Left colon (tissue), 2 donors: ENCODE measurements at regions of chr2 and their contacts with region 1.

Region 1: DNA sequence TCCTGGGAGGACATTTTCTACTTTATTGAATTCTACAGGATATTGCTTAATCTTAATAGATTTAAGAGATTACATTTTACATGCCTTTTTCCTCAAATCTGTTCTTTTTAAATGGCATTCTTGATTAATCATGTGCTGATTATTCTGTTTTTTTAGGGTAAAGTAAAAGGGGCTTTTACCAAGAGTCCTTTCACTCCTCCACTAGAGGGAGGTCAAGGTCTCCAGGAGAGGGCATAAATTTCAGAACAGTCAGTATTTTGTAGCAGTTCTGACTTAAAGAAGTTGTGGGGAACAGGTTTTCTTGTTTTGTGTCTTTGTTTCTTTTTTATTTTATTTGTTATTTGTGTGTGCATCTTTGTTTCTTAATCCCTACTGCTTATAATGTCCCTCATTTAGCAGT is 25.4 kb downstream of the WDR75 start:
- DNase-seq: no peak
- ATAC-seq: peak; percentile 63

Region 2: DNA sequence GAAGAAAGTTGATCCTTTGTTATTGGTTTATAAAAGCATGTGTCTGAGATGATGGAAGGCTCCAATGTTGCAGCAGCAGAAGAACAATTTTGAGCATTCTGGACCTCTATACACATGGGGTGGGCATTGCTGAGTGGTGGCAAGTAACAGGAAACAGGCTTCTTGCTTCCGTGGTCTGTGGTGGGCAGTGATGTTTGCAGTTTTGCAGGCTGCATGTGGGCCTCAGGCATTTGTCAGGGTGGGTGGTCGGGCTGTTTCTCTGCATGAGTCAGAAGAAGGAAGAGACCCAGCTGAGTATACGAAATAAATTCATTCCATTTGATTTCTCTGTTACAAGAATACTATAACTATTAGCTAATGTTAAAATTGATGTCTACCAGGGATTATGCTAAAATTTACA is 732.0 kb before region 1 on chr2:
- intact Hi-C with region 1: no loop called
- DNase-seq: no peak
- ATAC-seq: no peak

Region 3: DNA sequence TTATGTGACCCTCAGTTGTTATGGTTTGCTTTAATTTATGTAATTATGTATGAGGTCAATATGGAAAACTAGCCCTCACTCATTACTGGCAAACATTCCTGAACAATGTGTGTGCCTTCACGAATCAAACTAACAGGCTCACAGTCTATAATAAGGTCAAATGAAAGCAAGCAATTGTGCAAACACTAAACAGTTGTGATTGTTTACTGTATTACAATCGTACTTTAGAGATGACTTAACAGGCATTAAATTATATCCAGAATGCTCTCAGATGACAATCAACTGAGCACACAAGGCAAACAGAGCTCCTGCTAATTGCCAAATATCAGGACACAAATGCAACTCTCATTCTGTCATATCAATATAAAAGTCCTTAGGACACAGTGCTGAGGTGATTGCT is 316.6 kb before region 1 on chr2:
- intact Hi-C with region 1: no loop called
- DNase-seq: no peak
- ATAC-seq: no peak

Region 4: GRCh38 chr2:189569295-189569910 is 102.7 kb after region 1 on chr2:
- intact Hi-C with region 1: loop called (anchors 10 kb)
- DNase-seq: no peak
- ATAC-seq: no peak

Region 5: DNA sequence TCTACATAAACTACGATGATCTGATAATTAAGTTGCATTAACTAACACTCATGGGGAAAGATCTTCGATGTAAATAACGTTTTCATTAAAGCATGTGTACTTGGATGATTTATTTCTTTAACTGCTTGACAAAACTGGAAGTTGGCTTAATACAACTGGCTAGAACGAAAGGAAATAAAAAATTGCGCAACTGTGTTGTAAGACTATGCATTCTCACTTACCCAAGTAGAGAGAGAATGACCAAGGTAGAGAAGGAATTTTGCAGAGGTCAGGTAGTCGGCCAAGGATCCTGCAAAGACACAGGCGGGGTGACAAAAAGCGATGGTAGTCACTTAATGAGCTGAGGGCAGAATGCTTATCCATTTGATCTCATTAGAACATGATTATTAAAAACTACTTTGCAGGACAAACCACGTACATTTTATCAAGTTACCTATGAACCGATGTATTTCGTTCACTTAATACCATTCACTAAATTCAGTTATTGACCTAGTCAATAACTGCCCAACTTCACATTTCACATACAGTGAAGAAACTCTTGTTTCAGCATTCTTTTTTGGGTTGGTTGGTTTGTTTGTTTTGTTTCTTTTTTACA is 113.0 kb after region 1 on chr2:
- intact Hi-C with region 1: loop called in 1 of 2 experiments (anchors 10 kb)
- DNase-seq: no peak
- ATAC-seq: peak; percentile 14